GM12878 (cell line): ENCODE measurements at regions of chr16 and their contacts with region 1.

Region 1: GRCh38 chr16:6884002-6884401 is 448.6 kb upstream of the RBFOX1 start:
- DNase-seq: no peak
- ATAC-seq: no peak
- H3K4me3 ChIP-seq: no peak overlapping the region
- H3K27ac ChIP-seq: no peak overlapping the region
- H3K4me1 ChIP-seq: no peaks in the 10 kb centered on the region
- H3K27me3 ChIP-seq: no peaks in the 10 kb centered on the region
- CTCF ChIP-seq: no peak
- EP300 ChIP-seq: no peak
- POLR2A ChIP-seq: no peak
- RAD21 ChIP-seq: no peak

Region 2: GRCh38 chr16:6897876-6898485 is 14.0 kb after region 1 on chr16:
- CTCF ChIA-PET with region 1: no interaction called
- POLR2A ChIA-PET with region 1: no interaction called
- RAD21 ChIA-PET with region 1: no interaction called
- SMC1A ChIA-PET with region 1: no interaction called
- in situ Hi-C with region 1: no loop called
- intact Hi-C with region 1: no loop called
- DNase-seq: no peak
- ATAC-seq: no peak
- H3K4me3 ChIP-seq: no peak overlapping the region
- H3K27ac ChIP-seq: no peak overlapping the region
- H3K4me1 ChIP-seq: no peaks in the 10 kb centered on the region
- H3K27me3 ChIP-seq: no peaks in the 10 kb centered on the region
- CTCF ChIP-seq: no peak
- EP300 ChIP-seq: no peak
- POLR2A ChIP-seq: no peak
- RAD21 ChIP-seq: no peak

Region 3: DNA sequence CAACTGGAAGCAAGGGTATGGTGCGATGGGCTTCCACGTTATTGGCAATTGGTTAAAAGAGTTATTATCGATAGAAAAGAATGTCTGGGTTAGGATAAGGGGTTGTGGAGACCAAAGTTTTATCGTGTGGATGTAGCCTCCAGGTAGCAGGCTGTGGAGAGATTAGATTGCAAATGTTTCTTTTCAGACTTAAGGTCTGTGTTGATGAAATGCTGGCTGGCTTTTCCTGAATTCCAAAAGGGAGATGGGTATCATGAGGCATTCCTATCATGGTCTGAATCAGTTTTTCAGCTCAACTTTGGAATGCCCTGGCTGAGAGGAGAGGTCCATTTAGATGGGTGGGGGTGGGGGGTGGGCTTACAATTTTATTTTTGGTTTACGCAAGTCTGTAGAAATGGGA is 53.6 kb after region 1 on chr16:
- CTCF ChIA-PET with region 1: no interaction called
- POLR2A ChIA-PET with region 1: no interaction called
- RAD21 ChIA-PET with region 1: no interaction called
- SMC1A ChIA-PET with region 1: no interaction called
- in situ Hi-C with region 1: no loop called
- intact Hi-C with region 1: no loop called
- DNase-seq: no peak
- ATAC-seq: no peak
- H3K4me3 ChIP-seq: no peak overlapping the region
- H3K27ac ChIP-seq: no peak overlapping the region
- H3K4me1 ChIP-seq: no peaks in the 10 kb centered on the region
- H3K27me3 ChIP-seq: no peaks in the 10 kb centered on the region
- CTCF ChIP-seq: no peak
- EP300 ChIP-seq: no peak
- POLR2A ChIP-seq: no peak
- RAD21 ChIP-seq: no peak

Region 4: DNA sequence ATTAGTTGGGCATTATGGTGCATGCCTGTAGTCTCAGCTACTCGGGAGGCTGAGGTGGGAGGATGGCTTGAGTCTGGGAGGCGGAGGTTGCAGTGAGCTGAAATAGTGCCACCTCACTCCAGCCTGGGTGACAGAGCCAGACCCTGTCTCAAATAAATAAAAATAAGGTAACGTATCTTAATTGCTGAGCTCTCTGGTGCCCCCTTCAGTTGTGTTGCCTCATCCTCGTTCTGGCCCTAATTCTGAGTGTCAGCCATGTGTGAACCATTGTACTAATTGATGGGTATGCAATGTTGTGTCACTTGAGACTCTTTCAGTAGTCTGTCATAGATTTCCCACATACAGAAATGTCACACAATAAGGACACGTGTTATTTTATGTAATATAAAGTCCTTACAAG is 85.6 kb after region 1 on chr16:
- CTCF ChIA-PET with region 1: no interaction called
- POLR2A ChIA-PET with region 1: no interaction called
- RAD21 ChIA-PET with region 1: no interaction called
- SMC1A ChIA-PET with region 1: no interaction called
- in situ Hi-C with region 1: no loop called
- intact Hi-C with region 1: no loop called
- DNase-seq: no peak
- ATAC-seq: no peak
- H3K4me3 ChIP-seq: no peak overlapping the region
- H3K27ac ChIP-seq: no peak overlapping the region
- H3K4me1 ChIP-seq: no peaks in the 10 kb centered on the region
- H3K27me3 ChIP-seq: no peaks in the 10 kb centered on the region
- CTCF ChIP-seq: no peak
- EP300 ChIP-seq: no peak
- POLR2A ChIP-seq: no peak
- RAD21 ChIP-seq: no peak

Region 5: GRCh38 chr16:6993559-6993958 is 109.6 kb after region 1 on chr16:
- CTCF ChIA-PET with region 1: no interaction called
- POLR2A ChIA-PET with region 1: no interaction called
- RAD21 ChIA-PET with region 1: no interaction called
- SMC1A ChIA-PET with region 1: no interaction called
- in situ Hi-C with region 1: loop called (anchors 25 kb)
- intact Hi-C with region 1: no loop called
- DNase-seq: no peak
- ATAC-seq: no peak
- H3K4me3 ChIP-seq: no peak overlapping the region
- H3K27ac ChIP-seq: no peak overlapping the region
- H3K4me1 ChIP-seq: no peaks in the 10 kb centered on the region
- H3K27me3 ChIP-seq: no peaks in the 10 kb centered on the region
- CTCF ChIP-seq: no peak
- EP300 ChIP-seq: no peak
- POLR2A ChIP-seq: no peak
- RAD21 ChIP-seq: no peak

Region 6: GRCh38 chr16:7313170-7313569 is 429.2 kb after region 1 on chr16:
- CTCF ChIA-PET with region 1: no interaction called
- POLR2A ChIA-PET with region 1: no interaction called
- RAD21 ChIA-PET with region 1: no interaction called
- SMC1A ChIA-PET with region 1: no interaction called
- in situ Hi-C with region 1: no loop called
- intact Hi-C with region 1: no loop called
- DNase-seq: no peak
- ATAC-seq: no peak
- H3K4me3 ChIP-seq: no peak overlapping the region
- H3K27ac ChIP-seq: no peak overlapping the region
- H3K4me1 ChIP-seq: no peaks in the 10 kb centered on the region
- H3K27me3 ChIP-seq: no peaks in the 10 kb centered on the region
- CTCF ChIP-seq: peak in 2 of 3 experiments; percentile 2 to 21; a peak in 2 of 6 replicates
- EP300 ChIP-seq: no peak
- POLR2A ChIP-seq: no peak
- RAD21 ChIP-seq: no peak